Endothelial cell of umbilical vein (primary cell): ENCODE measurements at regions of chrX and their contacts with region 1.

Region 1: DNA sequence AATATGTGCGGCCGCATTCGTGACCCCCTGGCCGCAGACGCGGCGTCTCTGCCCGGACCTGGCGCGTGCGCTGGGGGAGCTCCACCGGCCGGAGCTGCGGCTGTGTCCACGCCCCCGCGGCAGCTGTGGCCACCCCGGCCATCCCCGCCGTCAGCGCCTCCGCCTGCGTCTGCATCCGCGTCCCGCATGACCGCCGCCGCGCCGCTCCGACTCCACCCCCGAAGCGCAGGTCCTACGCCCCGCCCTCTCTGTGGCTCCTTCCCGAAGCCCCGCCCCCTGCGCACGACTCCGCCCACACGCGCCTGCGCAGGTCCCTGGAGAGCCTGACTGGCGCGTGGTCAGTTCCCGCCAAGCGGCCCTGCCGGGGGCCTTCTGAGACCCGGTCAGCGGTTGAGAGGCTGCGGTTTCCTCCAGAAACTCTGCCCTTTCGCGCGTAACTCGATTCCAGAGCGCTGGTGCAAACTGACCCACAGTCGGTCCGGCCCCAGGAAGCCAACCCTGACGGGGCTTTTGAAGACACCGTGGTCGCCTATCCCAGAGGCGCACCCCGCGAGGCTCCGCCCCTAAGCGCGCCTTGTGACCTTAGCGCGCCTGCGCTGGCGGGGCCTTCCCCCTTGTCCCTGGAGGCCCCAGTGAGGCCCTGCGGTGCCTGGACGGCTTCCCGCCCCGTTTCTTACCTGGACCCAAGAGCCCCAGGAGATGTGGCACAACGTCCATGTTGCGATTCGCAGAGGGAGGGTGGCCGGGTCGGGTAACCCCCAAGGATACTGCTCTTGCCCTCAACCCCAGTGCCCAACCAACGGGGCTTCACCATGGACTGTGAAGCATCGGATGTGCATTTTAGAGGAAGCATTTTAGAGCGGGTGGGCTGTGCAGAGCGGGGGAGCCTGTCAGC is at the start of gene LAGE3:
- DNase-seq: peak; percentile 92
- H3K4me3 ChIP-seq: peak within 1 kb of the TSS; percentile 39 to 56 (median 48)
- H3K27ac ChIP-seq: peak within 1 kb of the TSS; percentile 41
- H3K4me1 ChIP-seq: peaks cover 9% of the 10 kb centered on the region
- H3K27me3 ChIP-seq: no peaks in the 10 kb centered on the region
- CTCF ChIP-seq: no peak
- POLR2A ChIP-seq: peak; percentile 25
- total RNA-seq, gene LAGE3: 14.3 and 17.8 TPM in 2 replicates

Region 2: DNA sequence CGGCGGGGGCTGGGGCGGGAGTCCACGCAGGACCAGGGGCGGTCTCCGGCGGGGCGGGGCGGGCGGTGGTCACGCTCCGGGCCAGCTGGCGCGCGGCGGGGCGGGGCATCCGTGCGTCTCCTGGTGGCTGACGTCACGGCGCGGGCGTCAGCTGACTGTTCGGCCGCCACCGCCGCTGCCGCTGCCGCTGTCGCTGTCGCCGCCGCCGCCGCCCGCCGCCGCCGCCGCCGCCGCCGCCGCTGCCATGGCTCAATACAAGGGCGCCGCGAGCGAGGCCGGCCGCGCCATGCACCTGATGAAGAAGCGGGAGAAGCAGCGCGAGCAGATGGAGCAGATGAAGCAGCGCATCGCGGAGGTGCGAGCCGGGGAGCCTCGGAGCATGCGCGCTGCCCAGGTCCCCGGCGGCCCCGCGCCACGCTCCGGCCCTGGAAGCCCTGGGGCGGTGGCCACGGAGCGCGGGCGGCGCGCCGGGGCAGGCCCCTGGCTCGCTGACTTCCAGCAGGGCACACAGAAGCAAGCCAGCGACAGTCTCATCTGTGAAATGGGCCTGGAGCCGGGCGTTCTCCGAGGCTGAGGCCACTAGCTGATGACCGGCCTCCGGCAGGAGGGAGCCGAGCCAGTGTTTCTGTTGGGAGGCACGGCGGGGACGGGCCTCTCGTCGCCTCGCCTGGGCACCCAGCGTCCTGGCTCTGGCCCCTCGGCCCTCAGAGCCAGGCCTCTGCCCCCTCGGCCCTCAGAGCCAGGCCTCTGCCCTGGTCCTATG is 34.8 kb before region 1 on chrX and contains the start of gene FAM50A:
- CTCF ChIA-PET with region 1: no interaction called
- POLR2A ChIA-PET with region 1: no interaction called
- dilution Hi-C with region 1: no loop called
- intact Hi-C with region 1: loop called (anchors 5 kb)
- DNase-seq: peak; percentile 40
- H3K4me3 ChIP-seq: peak within 1 kb of the TSS; percentile 35 to 69 (median 50)
- H3K27ac ChIP-seq: peak within 1 kb of the TSS; percentile 63
- H3K4me1 ChIP-seq: peaks cover 8% of the 10 kb centered on the region
- H3K27me3 ChIP-seq: no peaks in the 10 kb centered on the region
- CTCF ChIP-seq: no peak
- POLR2A ChIP-seq: no peak
- total RNA-seq, gene FAM50A: 111 and 123 TPM in 2 replicates

Region 3: GRCh38 chrX:154458114-154458953 is 20.6 kb before region 1 on chrX and contains the start of gene PLXNA3:
- CTCF ChIA-PET with region 1: no interaction called
- POLR2A ChIA-PET with region 1: interaction called, 3 read pairs
- dilution Hi-C with region 1: no loop called
- intact Hi-C with region 1: loop called (anchors 2 kb)
- DNase-seq: no peak
- H3K4me3 ChIP-seq: peak within 1 kb of the TSS; percentile 73 to 81 (median 76)
- H3K27ac ChIP-seq: no peak within 1 kb of the TSS
- H3K4me1 ChIP-seq: peaks cover 7% of the 10 kb centered on the region
- H3K27me3 ChIP-seq: no peaks in the 10 kb centered on the region
- CTCF ChIP-seq: no peak
- POLR2A ChIP-seq: peak; percentile 72
- total RNA-seq, gene PLXNA3: 58.3 and 58.6 TPM in 2 replicates